ENCODE measurements at regions of chr10 and their contacts with region 1.

Region 1: GRCh38 chr10:9302120-9302746 is 1247.7 kb downstream of the GATA3 start:
- DNase-seq: peak; percentile 25
- H3K4me3 Mint-ChIP-seq: no peak overlapping the region
- H3K27ac Mint-ChIP-seq: no peak overlapping the region
- H3K4me1 Mint-ChIP-seq: no peaks in the 10 kb centered on the region
- H3K27me3 Mint-ChIP-seq: no peaks in the 10 kb centered on the region

Region 2: GRCh38 chr10:7687228-7687907 is 1614.9 kb before region 1 on chr10:
- CTCF ChIA-PET with region 1: interaction called, 3 read pairs
- intact Hi-C with region 1: loop called (anchors 10 kb)
- DNase-seq: peak; percentile 92
- H3K4me3 Mint-ChIP-seq: no peak overlapping the region
- H3K27ac Mint-ChIP-seq: no peak overlapping the region
- H3K4me1 Mint-ChIP-seq: peaks cover 10% of the 10 kb centered on the region
- H3K27me3 Mint-ChIP-seq: no peaks in the 10 kb centered on the region

Region 3: DNA sequence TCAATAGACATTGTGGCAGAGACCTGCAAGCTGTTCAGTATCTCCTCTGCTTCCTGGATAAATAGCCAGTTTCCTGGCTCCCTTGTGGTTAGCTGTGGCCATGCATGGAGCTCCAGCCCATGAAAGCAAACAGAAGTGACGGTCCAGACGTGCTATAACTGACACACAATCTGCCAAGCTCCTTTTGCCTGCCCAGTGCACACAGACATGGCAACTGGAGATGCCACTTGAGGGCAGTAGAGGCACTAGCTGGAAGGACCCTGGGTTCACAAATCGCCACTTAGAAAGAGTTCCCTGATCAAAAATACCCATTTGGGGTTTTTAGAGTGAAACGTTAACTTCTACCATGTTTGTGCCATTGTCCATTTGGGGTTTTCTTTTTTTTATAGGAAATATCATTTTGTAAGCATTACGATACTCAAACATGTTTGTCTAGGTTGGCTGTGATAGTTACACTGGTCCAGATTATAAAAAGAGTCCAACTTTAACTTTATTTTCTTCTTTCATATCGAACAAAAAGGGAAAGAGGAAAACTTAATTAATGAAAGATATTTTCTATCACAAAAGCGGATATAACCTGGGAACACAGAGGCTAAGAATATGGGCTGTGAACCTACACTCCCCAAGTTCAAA is 1545.8 kb before region 1 on chr10:
- CTCF ChIA-PET with region 1: no interaction called
- intact Hi-C with region 1: loop called (anchors 5 kb)
- DNase-seq: peak; percentile 39
- H3K4me3 Mint-ChIP-seq: no peak overlapping the region
- H3K27ac Mint-ChIP-seq: no peak overlapping the region
- H3K4me1 Mint-ChIP-seq: no peaks in the 10 kb centered on the region
- H3K27me3 Mint-ChIP-seq: no peaks in the 10 kb centered on the region

Region 4: DNA sequence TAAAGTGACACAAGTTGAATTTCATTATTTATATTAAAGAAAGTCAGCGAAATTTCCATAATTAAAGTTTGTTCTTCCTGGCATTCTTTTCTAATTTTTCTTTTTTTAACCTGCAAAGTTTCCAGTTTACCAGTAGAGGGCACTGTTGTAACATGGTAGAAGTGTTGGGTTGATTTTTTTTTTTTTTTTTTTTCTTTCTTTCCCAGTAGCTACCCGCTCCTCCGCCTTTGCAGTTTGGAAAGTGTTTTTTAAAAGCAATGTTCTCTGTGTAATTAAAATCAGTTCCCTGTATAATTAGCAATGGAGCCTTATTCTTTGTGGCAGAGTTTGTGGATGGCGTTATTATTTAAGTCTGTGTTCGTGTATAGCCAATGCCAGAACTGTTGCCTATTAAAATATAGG is 1430.2 kb before region 1 on chr10:
- CTCF ChIA-PET with region 1: no interaction called
- intact Hi-C with region 1: loop called (anchors 1 kb)
- DNase-seq: no peak
- H3K4me3 Mint-ChIP-seq: peak overlapping the region; percentile 64
- H3K27ac Mint-ChIP-seq: no peak overlapping the region
- H3K4me1 Mint-ChIP-seq: peaks cover 6% of the 10 kb centered on the region
- H3K27me3 Mint-ChIP-seq: no peaks in the 10 kb centered on the region

Region 5: DNA sequence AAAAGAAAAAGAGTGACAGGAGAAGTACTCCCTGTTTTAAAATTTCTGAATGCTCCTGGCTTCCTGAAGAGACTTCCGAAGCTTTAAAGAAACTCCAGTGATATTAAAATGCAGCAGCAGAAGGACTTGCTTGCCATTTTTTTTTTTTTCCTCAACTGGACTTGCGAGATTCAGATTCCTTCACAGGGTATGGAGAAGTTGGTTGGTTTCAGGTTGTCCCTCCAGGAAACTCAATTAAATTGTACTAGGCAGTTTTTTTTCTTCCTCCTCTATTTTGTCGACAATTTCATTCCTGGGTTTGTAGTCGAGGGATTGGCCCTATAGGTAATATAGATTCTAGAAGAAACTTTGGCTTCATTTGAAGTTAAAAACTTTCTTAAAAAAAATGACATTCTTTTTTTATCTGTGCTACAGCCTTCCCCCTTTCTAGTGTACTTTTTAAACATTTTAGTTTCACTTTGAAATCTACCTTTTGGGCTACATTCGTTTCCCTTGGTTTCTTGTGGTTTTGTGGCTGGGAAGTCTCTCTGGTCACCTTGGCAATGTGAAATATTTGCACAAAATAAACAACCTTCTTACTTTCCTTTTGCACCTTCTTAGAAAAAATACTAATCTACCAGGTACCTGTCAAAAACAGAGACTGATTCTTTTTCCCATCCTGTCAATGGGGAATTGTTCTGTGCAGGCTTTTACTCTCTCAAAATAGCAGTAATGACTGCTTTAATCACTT is 897.7 kb before region 1 on chr10:
- CTCF ChIA-PET with region 1: no interaction called
- intact Hi-C with region 1: loop called (anchors 2 kb)
- DNase-seq: peak; percentile 53
- H3K4me3 Mint-ChIP-seq: peak overlapping the region; percentile 4
- H3K27ac Mint-ChIP-seq: no peak overlapping the region
- H3K4me1 Mint-ChIP-seq: peaks cover 58% of the 10 kb centered on the region
- H3K27me3 Mint-ChIP-seq: no peaks in the 10 kb centered on the region

Region 6: GRCh38 chr10:8473205-8473604 is 829.0 kb before region 1 on chr10:
- CTCF ChIA-PET with region 1: no interaction called
- intact Hi-C with region 1: loop called (anchors 10 kb)
- DNase-seq: peak; percentile 13
- H3K4me3 Mint-ChIP-seq: no peak overlapping the region
- H3K27ac Mint-ChIP-seq: no peak overlapping the region
- H3K4me1 Mint-ChIP-seq: peaks cover 2% of the 10 kb centered on the region
- H3K27me3 Mint-ChIP-seq: peaks cover 3% of the 10 kb centered on the region

Region 7: DNA sequence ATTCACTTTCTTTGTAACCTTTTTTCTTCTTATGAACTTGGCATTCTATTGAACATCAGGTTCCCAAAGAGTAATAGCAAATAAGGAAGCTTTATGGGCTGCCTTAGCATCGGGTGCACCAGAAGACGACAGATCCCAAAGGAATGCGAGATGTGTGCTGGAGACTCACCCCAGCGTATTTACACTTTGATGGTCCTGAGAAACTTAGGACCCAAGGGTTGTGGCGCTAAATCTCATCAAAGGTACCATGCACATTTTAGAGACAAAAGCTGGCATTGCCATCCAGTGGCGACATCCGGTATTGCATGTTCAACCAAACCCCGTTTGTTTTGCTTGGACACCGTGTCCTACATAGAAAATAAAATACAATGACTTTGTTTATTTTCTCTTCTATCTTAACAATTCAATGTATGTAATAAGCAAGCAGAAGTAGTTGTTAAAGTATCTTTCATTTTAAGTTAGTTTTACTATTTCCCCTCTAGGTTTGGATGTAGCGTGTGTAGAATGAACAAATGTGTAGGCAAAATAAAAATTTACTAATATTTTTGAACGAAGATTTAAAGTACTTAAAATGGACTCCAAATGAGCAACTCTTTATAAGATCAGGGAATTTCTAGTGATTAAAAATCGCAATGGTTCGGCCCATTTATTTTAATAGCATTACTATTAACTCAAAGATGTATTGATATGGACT is 93.0 kb before region 1 on chr10:
- CTCF ChIA-PET with region 1: no interaction called
- intact Hi-C with region 1: loop called (anchors 2 kb)
- DNase-seq: peak; percentile 86
- H3K4me3 Mint-ChIP-seq: no peak overlapping the region
- H3K27ac Mint-ChIP-seq: no peak overlapping the region
- H3K4me1 Mint-ChIP-seq: peaks cover 3% of the 10 kb centered on the region
- H3K27me3 Mint-ChIP-seq: peaks cover 2% of the 10 kb centered on the region

Measured in activated naive CD4-positive, alpha-beta T cell treated with anti-CD3 and anti-CD28 coated beads for 36 hours (primary cell).